H1 (cell line): ENCODE measurements at regions of chr5 and their contacts with region 1.

Region 1: DNA sequence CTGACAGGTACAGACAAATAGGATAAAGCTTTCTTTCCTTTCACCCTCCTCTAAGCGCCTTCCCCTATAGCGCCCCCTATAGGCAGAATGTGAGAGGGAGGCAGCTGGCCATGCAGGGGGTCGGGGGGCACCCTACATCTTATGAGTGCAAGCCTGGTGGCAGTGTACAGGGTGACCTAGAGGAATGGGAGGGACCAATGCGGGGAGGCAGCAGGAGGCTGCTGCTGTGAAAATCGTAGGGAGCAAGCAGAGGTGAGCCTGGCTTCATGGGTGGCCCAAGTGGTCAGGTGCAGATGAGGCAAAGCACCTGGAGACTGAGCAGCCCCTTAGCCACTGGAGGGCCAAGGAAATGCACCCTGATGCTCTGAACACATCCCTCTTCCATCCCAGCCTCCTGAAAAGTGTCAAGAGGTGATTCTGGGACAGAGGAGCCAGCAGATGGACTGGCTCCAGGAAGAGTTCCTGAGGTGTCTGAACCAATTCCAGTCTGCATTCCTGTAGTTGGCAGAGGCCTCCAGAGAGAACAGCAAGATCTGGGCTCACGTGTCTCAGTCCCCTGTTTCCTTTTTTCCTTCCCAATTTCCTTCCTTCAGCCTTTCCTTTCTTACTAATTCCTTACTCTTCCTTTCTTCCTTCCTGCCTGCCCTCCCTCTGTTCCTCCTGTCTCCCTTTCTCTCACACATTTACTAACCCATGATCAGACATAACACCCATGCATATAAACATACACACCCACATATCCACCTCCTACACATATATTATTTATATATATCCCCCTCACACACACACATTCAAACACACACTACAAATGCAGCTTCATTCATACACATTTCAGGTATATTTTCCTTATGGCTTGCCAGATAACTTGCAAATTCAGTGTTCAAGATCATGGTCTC is 32.8 kb upstream of the GALNT10 start:
- DNase-seq: peak in 1 of 2 experiments; percentile 82
- H3K4me3 ChIP-seq: no peak overlapping the region
- H3K27ac ChIP-seq: no peak overlapping the region; the same call in 1 of the 2 replicates
- H3K4me1 ChIP-seq: peaks cover 0 to 3% (median 1%) of the 10 kb centered on the region in 4 experiments; a peak in 1 of 7 replicates
- H3K27me3 ChIP-seq: no peaks in the 10 kb centered on the region
- CTCF ChIP-seq: peak; percentile 65 to 76 (median 75)
- EP300 ChIP-seq: no peak
- POLR2A ChIP-seq: no peak
- RAD21 ChIP-seq: peak; percentile 56 to 58

Region 2: DNA sequence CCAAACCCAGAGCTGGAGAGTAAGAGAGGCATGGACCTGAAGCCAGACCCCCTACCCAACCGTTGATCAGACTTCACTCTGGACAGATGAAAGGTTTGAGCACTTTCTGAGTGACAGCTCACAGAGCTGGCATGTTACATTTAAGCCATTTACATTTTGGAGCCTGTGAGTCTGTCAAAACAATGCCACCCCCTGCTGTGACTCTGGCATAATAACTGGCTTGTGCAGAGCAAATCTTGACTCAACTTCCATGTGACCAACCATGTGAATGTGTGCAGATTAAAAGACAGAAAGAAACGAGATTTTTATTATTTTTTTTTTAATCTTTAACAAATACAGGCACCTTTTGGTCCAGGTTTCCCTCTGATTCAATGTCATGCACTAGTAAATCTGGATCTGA is 70.5 kb before region 1 on chr5:
- CTCF ChIA-PET with region 1: interaction called, 14 read pairs
- POLR2A ChIA-PET with region 1: no interaction called
- DNase-seq: no peak
- H3K4me3 ChIP-seq: no peak overlapping the region
- H3K27ac ChIP-seq: no peak overlapping the region
- H3K4me1 ChIP-seq: peaks cover 0 to 6% (median under 1%) of the 10 kb centered on the region in 4 experiments; a peak in 2 of 7 replicates
- H3K27me3 ChIP-seq: no peaks in the 10 kb centered on the region
- CTCF ChIP-seq: no peak
- EP300 ChIP-seq: no peak
- POLR2A ChIP-seq: no peak
- RAD21 ChIP-seq: no peak

Region 3: DNA sequence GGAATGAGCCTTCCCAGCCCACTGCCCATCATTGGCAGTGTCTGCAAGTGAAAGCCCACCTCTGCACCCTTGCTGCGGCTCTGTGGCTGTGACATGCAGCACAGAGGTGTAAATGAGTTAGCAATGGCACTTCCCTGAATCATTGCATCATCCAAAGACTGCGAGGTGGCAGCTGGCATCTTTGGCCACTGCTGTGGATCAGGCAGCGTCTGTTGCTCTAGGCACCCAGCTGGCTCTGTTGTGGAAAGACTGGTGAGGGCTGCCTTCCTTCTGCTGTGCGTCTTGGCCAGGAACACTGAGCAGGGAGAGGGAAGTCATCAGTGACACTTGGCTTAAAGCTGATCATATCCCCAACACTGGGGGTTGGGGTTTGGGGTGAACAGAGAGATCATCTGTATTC is 54.5 kb before region 1 on chr5:
- CTCF ChIA-PET with region 1: interaction called, 27 read pairs
- POLR2A ChIA-PET with region 1: no interaction called
- DNase-seq: no peak
- H3K4me3 ChIP-seq: no peak overlapping the region
- H3K27ac ChIP-seq: no peak overlapping the region
- H3K4me1 ChIP-seq: peaks cover 3 to 17% (median 6%) of the 10 kb centered on the region in 4 experiments
- H3K27me3 ChIP-seq: no peaks in the 10 kb centered on the region
- CTCF ChIP-seq: no peak
- EP300 ChIP-seq: no peak
- POLR2A ChIP-seq: no peak
- RAD21 ChIP-seq: no peak

Region 4: DNA sequence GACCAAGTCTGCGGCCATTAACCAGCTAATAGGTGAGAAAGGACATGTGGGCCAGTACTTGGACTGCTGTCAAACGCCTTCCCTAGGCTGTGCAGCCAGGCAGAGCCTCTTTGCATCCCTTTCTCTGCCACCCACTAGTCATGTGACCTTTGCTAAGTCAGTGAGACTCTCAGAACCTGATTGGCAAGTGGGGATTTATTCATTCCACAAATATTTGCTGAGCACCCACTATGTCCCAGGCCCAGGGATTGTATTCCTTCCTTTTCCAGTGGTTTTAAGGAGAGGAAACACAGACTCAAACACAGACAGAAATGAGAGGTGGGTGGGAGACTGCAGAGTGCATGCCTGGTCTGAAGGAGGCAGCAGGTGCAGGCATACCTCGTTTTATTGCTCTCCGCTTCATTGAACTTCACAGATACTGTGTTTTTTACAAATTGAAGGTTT is 38.8 kb before region 1 on chr5:
- CTCF ChIA-PET with region 1: interaction called, 19 read pairs
- POLR2A ChIA-PET with region 1: no interaction called
- DNase-seq: no peak
- H3K4me3 ChIP-seq: no peak overlapping the region
- H3K27ac ChIP-seq: no peak overlapping the region
- H3K4me1 ChIP-seq: peaks cover 0 to 3% (median 1%) of the 10 kb centered on the region in 4 experiments; a peak in 1 of 7 replicates
- H3K27me3 ChIP-seq: no peaks in the 10 kb centered on the region
- CTCF ChIP-seq: peak in 1 of 3 experiments; percentile 36; a peak in 1 of 4 replicates
- EP300 ChIP-seq: no peak
- POLR2A ChIP-seq: no peak
- RAD21 ChIP-seq: 0 out of 4 replicates have a peak, but pooled peaks of 1 of the 2 experiments have one; percentile 6

Region 5: DNA sequence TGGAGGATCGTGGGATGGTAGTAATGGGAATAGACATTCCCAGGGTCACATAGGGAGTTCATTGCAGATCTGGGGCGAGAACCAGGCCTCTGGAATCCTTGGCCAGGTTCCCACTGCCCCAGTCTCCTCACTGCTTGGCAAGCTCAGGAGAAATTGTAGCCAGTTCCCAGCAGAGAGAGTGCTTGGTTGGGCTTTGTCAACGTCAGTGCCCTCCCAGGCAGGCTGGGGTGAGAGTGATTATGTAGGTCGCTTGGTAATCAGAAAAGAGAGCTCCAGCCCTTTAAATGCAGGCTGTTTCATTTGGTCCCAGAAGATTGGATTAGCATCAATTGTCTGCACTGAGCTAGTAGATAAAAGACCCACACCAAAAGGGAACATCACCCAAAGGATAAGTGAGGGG is 19.0 kb before region 1 on chr5:
- CTCF ChIA-PET with region 1: interaction called, 73 read pairs
- POLR2A ChIA-PET with region 1: no interaction called
- DNase-seq: no peak
- H3K4me3 ChIP-seq: no peak overlapping the region
- H3K27ac ChIP-seq: no peak overlapping the region
- H3K4me1 ChIP-seq: peaks cover 0 to 3% (median 1%) of the 10 kb centered on the region in 4 experiments; a peak in 2 of 7 replicates
- H3K27me3 ChIP-seq: no peaks in the 10 kb centered on the region
- CTCF ChIP-seq: no peak
- EP300 ChIP-seq: no peak
- POLR2A ChIP-seq: no peak
- RAD21 ChIP-seq: no peak

Region 6: GRCh38 chr5:154174091-154174490 is 16.4 kb after region 1 on chr5:
- CTCF ChIA-PET with region 1: interaction called, 167 read pairs
- POLR2A ChIA-PET with region 1: no interaction called
- DNase-seq: no peak
- H3K4me3 ChIP-seq: no peak overlapping the region
- H3K27ac ChIP-seq: no peak overlapping the region
- H3K4me1 ChIP-seq: no peaks in the 10 kb centered on the region
- H3K27me3 ChIP-seq: no peaks in the 10 kb centered on the region
- CTCF ChIP-seq: no peak
- EP300 ChIP-seq: no peak
- POLR2A ChIP-seq: no peak
- RAD21 ChIP-seq: no peak

Region 7: DNA sequence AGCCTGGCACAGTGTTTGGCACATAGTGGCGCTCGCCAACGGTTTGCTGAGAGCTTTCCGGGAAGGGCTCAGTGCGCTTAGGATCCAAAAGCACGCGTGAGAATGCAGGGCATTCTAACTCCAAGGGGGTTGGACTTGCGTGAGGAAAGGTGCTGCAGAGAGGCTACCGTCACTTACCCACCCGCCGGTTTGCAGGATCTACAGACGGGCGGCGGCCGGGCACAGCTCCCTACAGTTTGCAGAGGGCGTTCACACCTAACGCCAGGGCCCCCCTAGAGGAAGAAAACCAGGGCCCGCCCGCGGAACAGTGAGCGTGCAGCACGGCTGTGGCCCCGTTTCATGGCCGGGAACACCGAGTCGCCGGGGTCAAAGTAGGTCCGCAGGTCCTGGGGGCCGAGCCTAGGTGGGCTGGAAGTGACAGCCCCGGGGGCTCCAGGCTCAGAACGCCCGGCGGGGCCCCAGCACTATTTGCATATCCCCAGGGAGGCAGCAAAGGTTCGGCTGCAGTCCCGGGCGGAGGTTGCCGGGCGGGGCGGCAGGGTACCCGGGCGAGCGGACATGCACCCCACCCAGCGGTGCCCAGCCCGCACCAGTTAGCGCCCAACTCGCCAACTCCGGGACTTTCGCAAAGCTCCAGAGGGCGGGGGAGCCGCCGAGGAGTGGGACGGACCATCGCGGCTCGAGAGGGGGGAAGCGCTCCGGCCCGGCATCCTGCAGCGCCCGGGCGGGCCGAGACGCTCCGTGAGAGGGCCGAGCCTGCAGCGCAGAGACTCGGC is 32.3 kb after region 1 on chr5:
- CTCF ChIA-PET with region 1: interaction called, 167 read pairs
- POLR2A ChIA-PET with region 1: no interaction called
- DNase-seq: peak in 1 of 2 experiments; percentile 84
- H3K4me3 ChIP-seq: peak overlapping the region; percentile 45 to 77 (median 56)
- H3K27ac ChIP-seq: peak overlapping the region; percentile 71; the same call in 1 of the 2 replicates
- H3K4me1 ChIP-seq: peaks cover 6 to 18% (median 10%) of the 10 kb centered on the region in 4 experiments; a peak in 5 of 7 replicates
- H3K27me3 ChIP-seq: peaks cover 12 to 50% (median 39%) of the 10 kb centered on the region in 4 experiments
- CTCF ChIP-seq: peak in 2 of 3 experiments; percentile 16 to 27; a peak in 3 of 4 replicates
- EP300 ChIP-seq: peak in 1 of 2 experiments; percentile 73; a peak in 1 of 3 replicates
- POLR2A ChIP-seq: no peak; a peak in 1 of 3 replicates
- RAD21 ChIP-seq: peak in 1 of 2 experiments; percentile 11; a peak in 1 of 4 replicates

Region 8: GRCh38 chr5:154260224-154260927 is 102.6 kb after region 1 on chr5:
- CTCF ChIA-PET with region 1: no interaction called
- POLR2A ChIA-PET with region 1: no interaction called
- DNase-seq: no peak
- H3K4me3 ChIP-seq: no peak overlapping the region
- H3K27ac ChIP-seq: no peak overlapping the region
- H3K4me1 ChIP-seq: peaks cover 0 to 15% (median 11%) of the 10 kb centered on the region in 4 experiments; a peak in 3 of 7 replicates
- H3K27me3 ChIP-seq: no peaks in the 10 kb centered on the region
- CTCF ChIP-seq: no peak
- EP300 ChIP-seq: no peak
- POLR2A ChIP-seq: no peak
- RAD21 ChIP-seq: no peak